MCF 10A (cell line): ENCODE measurements at regions of chr1 and their contacts with region 1.

Region 1: DNA sequence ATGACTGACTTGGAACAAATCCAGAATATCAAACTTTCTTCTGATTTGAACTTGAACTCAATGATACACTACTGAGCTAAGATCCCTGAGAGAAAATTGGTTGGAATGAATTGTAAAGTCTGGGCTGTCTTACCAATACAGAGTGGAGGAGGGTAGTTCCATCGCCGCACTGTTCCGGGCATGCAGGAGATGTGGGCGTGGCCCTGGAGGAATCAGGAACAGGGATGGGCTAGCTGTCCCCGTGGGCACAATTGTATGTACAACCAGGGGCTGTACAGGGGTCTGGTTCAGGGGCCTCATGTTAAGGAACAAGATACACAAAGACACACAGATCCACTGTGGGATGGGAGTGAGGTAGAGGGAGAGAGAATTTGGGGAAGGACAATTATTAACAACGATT is 144.3 kb downstream of the ZSCAN20 start:
- DNase-seq: no peak
- H3K4me3 Mint-ChIP-seq: no peak overlapping the region
- H3K27ac Mint-ChIP-seq: no peak overlapping the region
- H3K4me1 Mint-ChIP-seq: peaks cover 4% of the 10 kb centered on the region
- H3K27me3 Mint-ChIP-seq: peaks cover 85% of the 10 kb centered on the region
- CTCF ChIP-seq: no peak

Region 2: GRCh38 chr1:33633019-33633801 is 16.4 kb after region 1 on chr1:
- CTCF ChIA-PET with region 1: interaction called, 13 read pairs
- POLR2A ChIA-PET with region 1: no interaction called
- intact Hi-C with region 1: no loop called
- DNase-seq: peak; percentile 88
- H3K4me3 Mint-ChIP-seq: no peak overlapping the region
- H3K27ac Mint-ChIP-seq: no peak overlapping the region
- H3K4me1 Mint-ChIP-seq: peaks cover 6% of the 10 kb centered on the region
- H3K27me3 Mint-ChIP-seq: peaks cover 62% of the 10 kb centered on the region
- CTCF ChIP-seq: peak; percentile 94

Region 3: DNA sequence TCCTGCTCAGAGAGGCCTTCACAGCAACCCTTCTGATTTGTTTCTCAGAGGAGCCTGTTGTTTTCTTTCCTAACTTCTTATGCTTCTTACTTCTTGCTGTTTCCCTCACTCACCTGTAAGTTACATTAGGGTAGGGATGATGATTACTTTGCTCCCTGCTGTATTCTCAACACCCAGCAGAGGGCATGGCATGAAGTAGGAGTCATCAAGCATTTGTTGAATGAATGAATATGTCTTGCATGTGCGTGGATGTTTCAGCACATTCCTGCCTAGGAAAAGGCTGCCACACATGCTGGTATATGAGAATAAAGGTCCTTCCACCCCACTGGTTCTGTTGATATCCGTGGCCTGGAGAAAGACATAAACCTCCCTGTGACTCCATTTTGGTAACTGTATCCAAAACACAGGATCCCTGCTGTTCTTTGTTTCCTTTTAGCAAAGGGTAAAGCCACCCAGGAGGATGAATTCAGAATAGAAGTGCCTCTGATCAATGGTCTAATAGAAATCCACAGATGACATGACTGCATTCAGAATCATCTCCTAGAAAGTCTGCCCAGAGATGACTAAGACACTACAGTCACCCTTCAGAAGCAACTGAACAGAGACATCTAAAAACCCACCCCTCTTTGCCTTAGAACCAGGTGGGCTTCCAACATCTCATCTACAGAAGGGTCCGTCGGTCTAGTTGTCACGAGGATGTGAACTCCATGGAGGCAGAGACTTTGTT is 24.5 kb after region 1 on chr1:
- CTCF ChIA-PET with region 1: interaction called, 13 read pairs
- POLR2A ChIA-PET with region 1: no interaction called
- intact Hi-C with region 1: no loop called
- DNase-seq: peak; percentile 45
- H3K4me3 Mint-ChIP-seq: no peak overlapping the region
- H3K27ac Mint-ChIP-seq: no peak overlapping the region
- H3K4me1 Mint-ChIP-seq: no peaks in the 10 kb centered on the region
- H3K27me3 Mint-ChIP-seq: peaks cover 54% of the 10 kb centered on the region
- CTCF ChIP-seq: peak; percentile 43